PC-9 (cell line): ENCODE measurements at regions of chr13 and their contacts with region 1.

Region 1: DNA sequence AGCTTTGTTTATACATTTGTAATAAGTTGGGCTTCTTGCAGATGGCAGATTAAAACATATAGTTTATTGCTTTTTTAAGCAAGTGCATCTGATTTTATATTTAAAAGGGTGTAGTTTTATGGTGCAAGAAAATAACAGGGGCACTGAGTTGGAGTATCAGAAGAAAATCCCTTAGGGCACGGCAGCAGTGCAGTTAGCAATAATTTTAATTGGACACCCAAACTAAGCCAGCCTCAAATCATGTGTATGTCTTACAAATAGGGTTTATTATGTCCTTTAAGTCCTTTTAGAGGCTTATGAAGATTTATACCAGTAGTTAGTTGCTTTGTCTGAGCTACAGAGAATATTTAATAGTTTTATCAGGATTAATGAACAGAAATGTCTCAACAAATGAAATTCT is 57.5 kb downstream of the GPC6 start:
- DNase-seq: no peak
- H3K4me3 ChIP-seq: no peak overlapping the region
- H3K27ac ChIP-seq: no peak overlapping the region
- H3K4me1 ChIP-seq: no peaks in the 10 kb centered on the region
- H3K27me3 ChIP-seq: no peaks in the 10 kb centered on the region
- CTCF ChIP-seq: no peak

Region 2: GRCh38 chr13:93108111-93108601 is 175.9 kb before region 1 on chr13:
- CTCF ChIA-PET with region 1: no interaction called
- POLR2A ChIA-PET with region 1: no interaction called
- intact Hi-C with region 1: no loop called
- DNase-seq: no peak
- H3K4me3 ChIP-seq: no peak overlapping the region
- H3K27ac ChIP-seq: no peak overlapping the region
- H3K4me1 ChIP-seq: no peaks in the 10 kb centered on the region
- H3K27me3 ChIP-seq: no peaks in the 10 kb centered on the region
- CTCF ChIP-seq: no peak

Region 3: GRCh38 chr13:93298713-93299112 is 14.6 kb after region 1 on chr13:
- CTCF ChIA-PET with region 1: no interaction called
- POLR2A ChIA-PET with region 1: no interaction called
- intact Hi-C with region 1: loop called (anchors 1 kb)
- DNase-seq: no peak
- H3K4me3 ChIP-seq: no peak overlapping the region
- H3K27ac ChIP-seq: no peak overlapping the region
- H3K4me1 ChIP-seq: no peaks in the 10 kb centered on the region
- H3K27me3 ChIP-seq: no peaks in the 10 kb centered on the region
- CTCF ChIP-seq: no peak